GM12878 (cell line): ENCODE measurements at regions of chr11 and their contacts with region 1.

Region 1: GRCh38 chr11:1652771-1653540 is 23.4 kb downstream of the KRTAP5-5 start:
- DNase-seq: no peak
- ATAC-seq: peak; percentile 97
- H3K4me3 ChIP-seq: no peak overlapping the region
- H3K27ac ChIP-seq: no peak overlapping the region
- H3K4me1 ChIP-seq: no peaks in the 10 kb centered on the region
- H3K27me3 ChIP-seq: peaks cover 0 to 3% of the 10 kb centered on the region in 2 experiments; a peak in 2 of 4 replicates
- CTCF ChIP-seq: peak; percentile 90 to 94 (median 91)
- EP300 ChIP-seq: no peak
- POLR2A ChIP-seq: no peak
- RAD21 ChIP-seq: peak; percentile 83

Region 2: DNA sequence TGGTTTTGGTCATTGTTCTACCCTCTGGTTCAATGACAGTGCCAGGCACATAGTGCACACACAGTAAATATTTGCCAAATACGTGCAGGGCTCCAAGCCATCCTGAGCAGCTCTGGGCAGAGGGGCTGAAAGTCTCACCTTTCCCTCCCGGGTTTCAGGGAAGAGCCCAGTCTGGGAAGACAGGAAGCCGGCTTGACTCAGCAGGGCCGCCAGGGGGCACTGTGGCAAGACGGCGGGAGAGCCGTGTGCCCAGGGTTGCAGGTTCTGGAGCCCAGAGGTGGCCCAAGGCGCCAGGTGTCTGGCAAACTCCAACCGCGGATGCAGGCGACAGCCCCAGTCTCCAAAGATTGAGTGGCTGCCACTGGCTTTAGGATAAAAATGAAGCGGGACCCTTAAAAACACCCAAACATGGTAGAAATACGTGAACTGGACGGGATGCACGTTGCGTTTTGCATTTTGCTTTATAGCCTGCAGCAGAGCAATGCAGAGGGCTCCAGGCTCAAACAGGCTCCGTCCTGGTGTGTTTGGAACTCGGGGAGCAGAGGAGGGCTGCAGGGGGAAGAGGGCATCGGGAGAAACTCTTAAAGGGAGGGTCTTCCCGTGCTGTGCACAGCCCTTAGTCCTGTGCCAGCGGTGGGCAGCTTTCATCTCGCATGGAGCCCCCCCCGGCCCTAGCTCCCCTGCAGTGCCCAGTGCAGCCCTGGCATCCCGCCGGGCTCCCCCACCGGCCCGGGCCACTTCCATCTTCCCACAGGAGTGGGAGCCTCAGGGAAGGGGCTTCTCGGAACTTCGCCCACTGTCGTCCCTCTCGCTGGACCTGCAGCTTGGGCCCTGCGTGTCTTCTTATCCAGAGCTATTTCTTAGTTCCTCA is 12.6 kb before region 1 on chr11:
- CTCF ChIA-PET with region 1: interaction called, 23 read pairs
- POLR2A ChIA-PET with region 1: no interaction called
- RAD21 ChIA-PET with region 1: interaction called, 3 read pairs
- SMC1A ChIA-PET with region 1: no interaction called
- in situ Hi-C with region 1: no loop called
- intact Hi-C with region 1: no loop called
- DNase-seq: no peak
- ATAC-seq: peak; percentile 71
- H3K4me3 ChIP-seq: no peak overlapping the region
- H3K27ac ChIP-seq: no peak overlapping the region
- H3K4me1 ChIP-seq: no peaks in the 10 kb centered on the region
- H3K27me3 ChIP-seq: no peaks in the 10 kb centered on the region; a peak in 2 of 4 replicates
- CTCF ChIP-seq: peak; percentile 54 to 81 (median 67)
- EP300 ChIP-seq: no peak
- POLR2A ChIP-seq: no peak
- RAD21 ChIP-seq: no peak

Region 3: GRCh38 chr11:2002807-2003206 is 349.9 kb after region 1 on chr11:
- CTCF ChIA-PET with region 1: interaction called, 17 read pairs
- POLR2A ChIA-PET with region 1: no interaction called
- RAD21 ChIA-PET with region 1: interaction called, 11 read pairs
- SMC1A ChIA-PET with region 1: interaction called, 12 read pairs
- in situ Hi-C with region 1: no loop called
- intact Hi-C with region 1: no loop called
- DNase-seq: no peak
- ATAC-seq: peak; percentile 79
- H3K4me3 ChIP-seq: no peak overlapping the region
- H3K27ac ChIP-seq: no peak overlapping the region
- H3K4me1 ChIP-seq: no peaks in the 10 kb centered on the region
- H3K27me3 ChIP-seq: no peaks in the 10 kb centered on the region
- CTCF ChIP-seq: no peak
- EP300 ChIP-seq: no peak
- POLR2A ChIP-seq: no peak
- RAD21 ChIP-seq: no peak